Activated naive CD8-positive, alpha-beta T cell treated with anti-CD3 and anti-CD28 coated beads, Interleukin-2, amount 10 ng/mL, durations not matched to agents 7 days and 5 days (primary cell): ENCODE measurements at regions of chr2 and their contacts with region 1.

Region 1: DNA sequence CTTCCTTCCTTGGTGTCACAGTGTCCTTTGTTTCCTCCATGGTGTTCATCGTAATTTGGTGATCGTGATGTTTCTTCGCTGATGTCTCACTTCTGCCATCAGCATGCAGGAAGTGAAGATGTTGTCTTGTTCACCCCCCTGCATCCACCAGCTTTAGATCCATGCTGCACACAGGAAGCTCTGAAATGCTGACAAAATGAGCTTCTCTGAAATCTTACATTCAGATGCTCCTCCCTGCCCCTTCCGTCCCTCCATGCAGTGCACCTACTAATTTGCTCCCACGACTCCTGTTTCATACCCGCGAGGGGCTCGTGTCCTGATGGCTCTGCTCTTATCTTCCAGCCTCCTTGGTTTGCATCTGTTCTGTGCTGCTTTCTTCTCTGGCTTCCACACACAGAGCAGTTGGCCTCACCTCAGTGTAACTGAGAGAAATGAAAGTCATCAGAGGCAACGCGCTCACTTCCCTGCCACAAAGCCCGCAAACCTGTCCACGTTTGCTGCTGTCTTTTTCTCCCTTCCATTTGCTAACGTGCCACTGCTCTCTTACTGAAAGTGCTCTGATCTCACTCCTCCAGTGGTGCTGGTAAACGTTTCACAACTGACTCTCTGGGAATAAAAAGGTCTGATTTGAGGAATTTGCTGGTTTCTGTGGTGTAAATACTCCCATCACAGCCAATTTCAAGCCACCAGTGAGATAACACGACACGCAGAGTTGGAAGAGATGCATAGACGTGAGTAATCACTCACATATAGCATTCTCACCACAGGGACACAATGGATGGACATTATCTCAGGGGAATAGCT is 41.0 kb upstream of the MGAT4A start:
- DNase-seq: peak; percentile 72
- ATAC-seq: peak; percentile 70
- H3K4me3 Mint-ChIP-seq: peak overlapping the region; percentile 98
- H3K27ac Mint-ChIP-seq: peak overlapping the region; percentile 100
- H3K4me1 Mint-ChIP-seq: peaks cover 60% of the 10 kb centered on the region
- H3K27me3 Mint-ChIP-seq: no peaks in the 10 kb centered on the region

Region 2: DNA sequence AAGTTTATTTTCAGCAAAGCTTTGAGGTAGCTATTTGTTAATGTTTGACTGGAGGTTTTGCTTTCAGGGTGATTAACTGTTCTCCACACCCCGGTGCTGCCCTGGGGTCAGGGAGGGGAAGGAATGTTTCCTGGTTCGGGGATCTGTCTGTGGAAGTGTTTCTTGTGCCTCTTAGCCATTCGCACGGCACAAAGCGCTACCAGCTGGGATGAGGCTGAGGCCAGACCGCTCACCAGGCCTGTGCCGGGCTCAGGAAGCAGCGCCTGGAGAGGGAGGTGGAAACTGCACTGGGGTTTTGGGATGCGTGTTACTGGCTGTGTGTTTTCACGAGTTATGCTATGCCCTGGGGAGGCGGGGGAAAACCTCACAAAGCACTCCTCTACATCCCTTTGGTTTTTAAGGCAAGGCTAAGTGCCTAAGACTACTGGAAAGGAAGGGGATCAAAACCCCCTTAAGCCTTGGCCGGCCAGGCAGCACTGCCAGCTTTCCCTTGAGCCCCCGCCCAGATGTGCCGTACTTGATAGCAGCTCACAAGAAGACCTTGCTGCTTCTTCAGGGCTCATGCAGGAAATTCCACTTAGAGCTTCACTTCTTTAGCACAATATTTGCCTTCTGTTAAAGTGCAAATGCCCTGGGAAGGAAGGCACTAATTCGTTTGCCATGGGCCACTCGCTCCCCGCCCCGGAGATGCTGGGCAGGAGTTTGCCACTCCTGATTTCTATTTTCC is 491.4 kb before region 1 on chr2:
- POLR2A ChIA-PET with region 1: no interaction called
- DNase-seq: no peak
- ATAC-seq: no peak
- H3K4me3 Mint-ChIP-seq: no peak overlapping the region
- H3K27ac Mint-ChIP-seq: no peak overlapping the region
- H3K4me1 Mint-ChIP-seq: no peaks in the 10 kb centered on the region
- H3K27me3 Mint-ChIP-seq: peaks cover 29% of the 10 kb centered on the region

Region 3: DNA sequence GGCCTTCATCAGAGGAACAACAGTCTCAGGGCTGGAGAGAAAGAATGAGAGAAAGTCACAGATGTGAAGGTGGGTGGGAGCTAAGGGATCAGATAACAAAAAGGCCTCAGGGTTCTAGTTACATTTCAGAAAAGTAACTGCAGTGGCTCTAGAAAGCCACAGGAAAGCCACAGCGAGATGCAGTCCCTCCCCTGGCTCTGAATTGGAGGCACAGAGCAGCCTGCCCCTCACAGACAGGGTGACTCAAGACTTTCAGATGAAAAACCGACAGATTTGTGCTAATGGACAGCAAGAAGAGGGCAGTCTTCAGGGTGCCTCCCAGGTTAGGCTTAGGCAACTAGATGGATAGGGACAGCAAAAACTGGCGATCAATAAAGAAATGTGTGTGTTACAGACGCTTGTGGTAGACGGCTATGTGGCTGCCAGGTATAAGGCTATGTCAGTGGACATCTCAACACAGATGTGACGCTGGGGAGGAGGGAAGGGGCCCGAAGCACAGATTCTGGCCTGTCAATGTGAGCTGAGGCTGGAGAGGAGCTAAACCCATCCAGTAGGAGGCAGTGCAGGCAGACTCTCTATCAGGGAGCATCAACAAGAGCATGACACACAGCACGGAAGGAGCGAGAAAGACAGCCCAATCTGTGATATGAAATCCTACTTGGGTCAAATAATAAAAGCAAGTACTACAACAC is 137.4 kb before region 1 on chr2:
- POLR2A ChIA-PET with region 1: no interaction called
- DNase-seq: peak; percentile 49
- ATAC-seq: peak; percentile 76
- H3K4me3 Mint-ChIP-seq: peak overlapping the region; percentile 50
- H3K27ac Mint-ChIP-seq: peak overlapping the region; percentile 84
- H3K4me1 Mint-ChIP-seq: peaks cover 34% of the 10 kb centered on the region
- H3K27me3 Mint-ChIP-seq: no peaks in the 10 kb centered on the region

Region 4: GRCh38 chr2:98649135-98649991 is 122.6 kb before region 1 on chr2:
- POLR2A ChIA-PET with region 1: interaction called, 17 read pairs
- DNase-seq: peak; percentile 57
- ATAC-seq: peak; percentile 93
- H3K4me3 Mint-ChIP-seq: peak overlapping the region; percentile 18
- H3K27ac Mint-ChIP-seq: peak overlapping the region; percentile 31
- H3K4me1 Mint-ChIP-seq: peaks cover 48% of the 10 kb centered on the region
- H3K27me3 Mint-ChIP-seq: no peaks in the 10 kb centered on the region

Region 5: DNA sequence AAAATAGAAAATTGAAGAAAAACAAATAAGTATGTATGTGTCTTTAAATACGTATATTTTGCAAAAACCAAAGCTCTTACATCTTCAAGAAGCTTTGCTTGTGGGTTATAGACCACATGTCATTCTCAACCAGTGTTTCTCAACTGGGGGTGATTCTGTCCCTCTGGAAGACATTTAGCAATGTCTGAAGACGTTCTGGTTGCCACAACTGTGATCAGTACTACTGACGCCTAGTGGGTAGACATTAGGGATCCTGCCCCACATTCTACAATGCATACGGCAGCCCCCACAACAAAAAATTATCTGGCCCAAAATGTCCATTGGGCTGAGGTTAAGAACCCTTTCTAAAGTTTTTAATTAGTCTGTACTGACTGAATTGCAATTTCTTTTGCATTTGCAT is 115.1 kb before region 1 on chr2:
- POLR2A ChIA-PET with region 1: interaction called, 28 read pairs
- DNase-seq: no peak
- ATAC-seq: peak; percentile 71
- H3K4me3 Mint-ChIP-seq: peak overlapping the region; percentile 75
- H3K27ac Mint-ChIP-seq: peak overlapping the region; percentile 91
- H3K4me1 Mint-ChIP-seq: peaks cover 75% of the 10 kb centered on the region
- H3K27me3 Mint-ChIP-seq: no peaks in the 10 kb centered on the region

Region 6: GRCh38 chr2:98757904-98758421 is 14.0 kb before region 1 on chr2:
- POLR2A ChIA-PET with region 1: interaction called, 48 read pairs
- DNase-seq: peak; percentile 56
- ATAC-seq: peak; percentile 92
- H3K4me3 Mint-ChIP-seq: peak overlapping the region; percentile 81
- H3K27ac Mint-ChIP-seq: peak overlapping the region; percentile 94
- H3K4me1 Mint-ChIP-seq: peaks cover 42% of the 10 kb centered on the region
- H3K27me3 Mint-ChIP-seq: no peaks in the 10 kb centered on the region

Region 7: GRCh38 chr2:98828793-98829371 is 57.0 kb after region 1 on chr2:
- POLR2A ChIA-PET with region 1: interaction called, 13 read pairs
- DNase-seq: peak; percentile 32
- ATAC-seq: peak; percentile 49
- H3K4me3 Mint-ChIP-seq: peak overlapping the region; percentile 54
- H3K27ac Mint-ChIP-seq: peak overlapping the region; percentile 71
- H3K4me1 Mint-ChIP-seq: peaks cover 36% of the 10 kb centered on the region
- H3K27me3 Mint-ChIP-seq: peaks cover 2% of the 10 kb centered on the region

Region 8: DNA sequence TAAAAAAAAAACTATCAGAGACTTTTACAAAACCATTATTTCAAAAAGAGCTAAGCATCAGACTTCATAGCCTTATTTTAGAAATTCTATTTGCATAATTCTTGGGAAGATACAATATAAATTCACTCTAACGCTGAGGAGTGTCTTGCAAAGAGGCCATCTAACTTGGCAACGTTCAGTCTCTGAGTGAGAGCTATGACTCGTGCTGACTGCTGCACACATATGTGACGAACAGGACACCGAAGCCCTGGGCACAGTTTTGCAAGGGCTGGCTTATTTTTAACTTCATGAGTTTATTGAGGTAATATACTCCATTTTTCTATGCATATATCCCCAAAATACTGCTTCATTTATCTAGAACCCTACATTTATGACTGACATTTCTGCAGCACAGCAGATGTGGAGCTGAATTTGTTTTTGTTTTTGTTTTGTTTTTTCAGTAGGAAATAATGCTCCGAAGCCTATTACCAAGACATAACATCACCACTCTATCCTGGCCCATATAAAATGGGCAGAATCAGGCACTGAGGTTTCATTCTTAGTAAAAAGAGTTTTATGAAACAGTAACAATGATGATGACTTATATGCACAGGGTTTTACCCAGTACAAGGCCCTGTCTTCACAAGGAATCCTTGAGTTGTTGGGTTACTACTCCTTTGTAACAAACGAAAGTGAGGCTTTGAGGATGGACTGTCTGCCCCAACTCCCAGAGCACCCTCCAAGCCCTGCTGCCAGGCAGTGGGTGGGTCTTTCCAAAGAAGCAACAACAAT is 95.8 kb after region 1 on chr2:
- POLR2A ChIA-PET with region 1: no interaction called
- DNase-seq: no peak
- ATAC-seq: no peak
- H3K4me3 Mint-ChIP-seq: no peak overlapping the region
- H3K27ac Mint-ChIP-seq: no peak overlapping the region
- H3K4me1 Mint-ChIP-seq: no peaks in the 10 kb centered on the region
- H3K27me3 Mint-ChIP-seq: peaks cover 11% of the 10 kb centered on the region

Region 9: GRCh38 chr2:98936353-98937351 is 164.7 kb after region 1 on chr2:
- POLR2A ChIA-PET with region 1: no interaction called
- DNase-seq: peak; percentile 49
- ATAC-seq: peak; percentile 30
- H3K4me3 Mint-ChIP-seq: peak overlapping the region; percentile 66
- H3K27ac Mint-ChIP-seq: no peak overlapping the region
- H3K4me1 Mint-ChIP-seq: peaks cover 3% of the 10 kb centered on the region
- H3K27me3 Mint-ChIP-seq: peaks cover 66% of the 10 kb centered on the region